ENCODE measurements at regions of chr20 and their contacts with region 1.

Region 1: DNA sequence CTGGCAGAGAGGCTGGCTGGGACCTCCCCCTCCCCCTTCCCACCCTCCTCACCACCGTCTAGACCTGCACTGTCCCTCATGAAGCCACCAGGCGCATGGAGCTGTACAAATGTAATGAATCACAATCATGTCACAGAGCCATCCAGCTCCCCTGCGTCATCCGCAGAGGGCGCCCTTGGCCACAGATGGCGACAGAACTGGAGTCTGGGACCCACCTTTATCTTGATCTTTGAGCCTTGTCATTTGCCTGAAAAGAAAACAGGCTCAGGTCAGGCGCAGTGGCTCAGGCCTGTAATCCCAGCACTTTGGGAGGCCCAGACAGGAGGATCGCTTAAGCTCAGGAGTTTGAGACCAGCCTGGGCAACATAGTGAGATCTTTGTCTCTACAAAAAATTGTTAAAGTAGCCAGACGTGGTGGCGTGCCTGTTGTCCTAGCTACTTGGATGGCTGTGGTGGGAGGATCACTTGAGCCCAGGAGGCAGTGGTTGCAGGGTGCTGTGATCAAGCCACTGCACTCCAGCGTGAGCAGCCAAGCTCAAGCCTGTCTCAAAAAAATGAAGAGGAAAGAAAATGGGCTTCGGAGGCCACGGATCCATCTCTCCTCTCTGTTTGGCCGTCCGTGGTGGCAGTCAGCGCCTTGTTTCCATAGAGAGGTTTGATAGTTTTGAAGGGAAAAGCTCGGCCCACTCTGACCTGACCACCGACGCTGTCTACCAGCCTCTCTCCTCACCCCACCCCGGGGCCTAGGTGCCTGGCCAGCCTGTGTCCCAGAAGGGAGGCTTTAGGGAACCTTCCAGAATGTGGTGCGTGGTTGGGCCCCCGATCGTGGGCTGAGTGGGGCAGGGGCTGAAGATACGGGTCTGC is 6.2 kb downstream of the COL9A3 start:
- DNase-seq: peak; percentile 98
- ATAC-seq: peak; percentile 61
- H3K4me3 ChIP-seq: peak overlapping the region in 1 of 3 experiments; percentile 71; a peak in 1 of 6 replicates
- H3K27ac ChIP-seq: peak overlapping the region; percentile 59
- H3K4me1 ChIP-seq: peaks cover 68% of the 10 kb centered on the region
- H3K27me3 ChIP-seq: no peaks in the 10 kb centered on the region
- CTCF ChIP-seq: peak; percentile 99
- EP300 ChIP-seq: peak; percentile 18 to 69; a peak in 3 of 4 replicates
- POLR2A ChIP-seq: 0 out of 4 replicates have a peak, but pooled peaks have one; percentile 3 to 35
- RAD21 ChIP-seq: peak; percentile 98

Region 2: GRCh38 chr20:62808211-62808865 is 14.7 kb before region 1 on chr20:
- CTCF ChIA-PET with region 1: interaction called, 3 read pairs
- POLR2A ChIA-PET with region 1: interaction called, 13 read pairs
- in situ Hi-C with region 1: no loop called
- intact Hi-C with region 1: loop called (anchors 1 kb)
- DNase-seq: peak; percentile 66
- ATAC-seq: peak; percentile 18
- H3K4me3 ChIP-seq: no peak overlapping the region
- H3K27ac ChIP-seq: no peak overlapping the region
- H3K4me1 ChIP-seq: peaks cover 38% of the 10 kb centered on the region
- H3K27me3 ChIP-seq: no peaks in the 10 kb centered on the region
- CTCF ChIP-seq: peak; percentile 95
- EP300 ChIP-seq: no peak
- POLR2A ChIP-seq: no peak; a peak in 3 of 4 replicates
- RAD21 ChIP-seq: peak; percentile 91

Region 3: DNA sequence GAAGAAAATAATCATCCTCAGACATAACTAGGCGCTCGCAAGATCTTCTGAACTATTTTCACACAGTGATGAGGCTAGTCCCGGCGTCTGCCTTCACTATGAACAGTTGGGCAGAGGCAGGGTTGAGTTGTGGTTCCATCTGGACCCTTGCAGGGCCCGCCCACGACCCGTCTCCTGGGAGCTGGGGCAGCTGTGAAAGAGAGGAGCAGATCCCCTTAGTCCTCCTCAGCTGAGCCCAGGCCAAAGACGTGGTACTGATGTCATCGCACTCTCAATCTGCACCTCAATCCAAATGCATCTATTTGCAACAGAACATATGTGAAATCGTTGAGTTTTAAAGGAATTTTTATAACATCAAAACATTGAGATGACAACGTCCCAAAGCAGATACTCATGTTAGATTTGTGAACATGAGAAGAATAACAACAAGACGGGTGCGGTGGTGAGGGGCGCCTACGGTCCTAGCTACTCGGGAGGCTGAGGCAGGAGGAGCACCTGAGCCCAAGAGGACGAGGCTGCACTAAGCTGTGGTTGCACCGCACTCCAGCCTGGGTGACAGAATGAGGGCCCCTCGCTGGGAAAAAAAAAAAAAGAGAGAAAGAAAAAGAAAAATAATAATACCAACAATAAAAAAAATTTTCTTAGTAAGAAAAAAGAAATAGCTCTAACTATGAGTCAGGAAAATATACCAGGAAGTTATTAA is 23.3 kb after region 1 on chr20:
- CTCF ChIA-PET with region 1: interaction called, 14 read pairs
- POLR2A ChIA-PET with region 1: interaction called, 3 read pairs
- in situ Hi-C with region 1: no loop called
- intact Hi-C with region 1: loop called (anchors 1 kb)
- DNase-seq: no peak
- ATAC-seq: no peak
- H3K4me3 ChIP-seq: no peak overlapping the region
- H3K27ac ChIP-seq: no peak overlapping the region
- H3K4me1 ChIP-seq: no peaks in the 10 kb centered on the region
- H3K27me3 ChIP-seq: no peaks in the 10 kb centered on the region
- CTCF ChIP-seq: no peak
- EP300 ChIP-seq: no peak
- POLR2A ChIP-seq: no peak
- RAD21 ChIP-seq: no peak

Region 4: GRCh38 chr20:62861726-62862336 is 38.8 kb after region 1 on chr20 and contains the start of gene TCFL5:
- CTCF ChIA-PET with region 1: no interaction called
- POLR2A ChIA-PET with region 1: interaction called, 11 read pairs
- in situ Hi-C with region 1: no loop called
- intact Hi-C with region 1: loop called (anchors 5 kb)
- DNase-seq: peak; percentile 88
- ATAC-seq: peak; percentile 93
- H3K4me3 ChIP-seq: peak within 1 kb of the TSS; percentile 61 to 83 (median 77)
- H3K27ac ChIP-seq: peak within 1 kb of the TSS; percentile 20
- H3K4me1 ChIP-seq: peaks cover 44% of the 10 kb centered on the region
- H3K27me3 ChIP-seq: peaks cover 0 to 11% of the 10 kb centered on the region in 2 experiments; a peak in 2 of 5 replicates
- CTCF ChIP-seq: no peak; the same call in 1 of the 2 replicates
- EP300 ChIP-seq: peak in 1 of 2 experiments; percentile 39; a peak in 1 of 4 replicates
- POLR2A ChIP-seq: peak; percentile 66 to 78
- RAD21 ChIP-seq: no peak; the same call in 1 of the 2 replicates
- total RNA-seq, gene TCFL5: 20.0 and 21.1 TPM in 2 replicates

Region 5: DNA sequence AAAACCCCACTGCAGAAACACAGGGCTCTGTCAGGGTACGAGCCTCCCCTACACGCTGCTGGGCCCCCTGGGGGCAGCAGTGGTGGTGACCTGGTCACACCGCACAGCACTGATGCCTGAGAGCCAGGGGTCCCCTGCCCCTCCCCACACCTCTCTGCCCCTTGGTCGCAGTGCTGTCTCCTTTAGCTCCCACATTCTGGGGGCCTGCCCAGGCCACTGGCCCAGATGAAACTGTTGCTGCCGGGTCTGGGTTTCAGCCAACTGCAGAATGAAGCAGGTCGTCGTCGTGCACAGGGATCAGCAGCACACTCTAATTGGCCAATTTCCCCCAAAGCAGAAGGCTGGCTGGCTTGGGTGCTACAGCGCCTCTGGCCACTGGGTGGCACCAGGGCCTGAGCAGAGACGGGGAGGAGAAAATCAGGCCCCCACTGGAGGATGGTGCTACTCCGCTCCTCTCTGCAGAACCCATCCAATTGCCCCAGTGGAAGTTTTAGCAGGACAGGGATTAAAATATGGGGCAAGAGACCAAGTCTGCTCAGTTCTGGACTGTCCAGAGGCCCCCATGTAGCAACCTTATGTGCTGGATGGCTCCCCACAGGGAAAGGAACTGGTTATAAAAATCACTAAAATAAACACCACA is 77.2 kb after region 1 on chr20:
- CTCF ChIA-PET with region 1: interaction called, 6 read pairs
- POLR2A ChIA-PET with region 1: interaction called, 4 read pairs
- in situ Hi-C with region 1: no loop called
- intact Hi-C with region 1: loop called (anchors 1 kb)
- DNase-seq: peak; percentile 82
- ATAC-seq: peak; percentile 90
- H3K4me3 ChIP-seq: peak overlapping the region in 1 of 3 experiments; percentile 44; a peak in 2 of 6 replicates
- H3K27ac ChIP-seq: peak overlapping the region; percentile 23
- H3K4me1 ChIP-seq: peaks cover 32% of the 10 kb centered on the region
- H3K27me3 ChIP-seq: no peaks in the 10 kb centered on the region
- CTCF ChIP-seq: peak; percentile 98
- EP300 ChIP-seq: 0 out of 4 replicates have a peak, but pooled peaks of 1 of the 2 experiments have one; percentile 2
- POLR2A ChIP-seq: peak in 1 of 2 experiments; percentile 78; a peak in 2 of 4 replicates
- RAD21 ChIP-seq: peak; percentile 95

Region 6: DNA sequence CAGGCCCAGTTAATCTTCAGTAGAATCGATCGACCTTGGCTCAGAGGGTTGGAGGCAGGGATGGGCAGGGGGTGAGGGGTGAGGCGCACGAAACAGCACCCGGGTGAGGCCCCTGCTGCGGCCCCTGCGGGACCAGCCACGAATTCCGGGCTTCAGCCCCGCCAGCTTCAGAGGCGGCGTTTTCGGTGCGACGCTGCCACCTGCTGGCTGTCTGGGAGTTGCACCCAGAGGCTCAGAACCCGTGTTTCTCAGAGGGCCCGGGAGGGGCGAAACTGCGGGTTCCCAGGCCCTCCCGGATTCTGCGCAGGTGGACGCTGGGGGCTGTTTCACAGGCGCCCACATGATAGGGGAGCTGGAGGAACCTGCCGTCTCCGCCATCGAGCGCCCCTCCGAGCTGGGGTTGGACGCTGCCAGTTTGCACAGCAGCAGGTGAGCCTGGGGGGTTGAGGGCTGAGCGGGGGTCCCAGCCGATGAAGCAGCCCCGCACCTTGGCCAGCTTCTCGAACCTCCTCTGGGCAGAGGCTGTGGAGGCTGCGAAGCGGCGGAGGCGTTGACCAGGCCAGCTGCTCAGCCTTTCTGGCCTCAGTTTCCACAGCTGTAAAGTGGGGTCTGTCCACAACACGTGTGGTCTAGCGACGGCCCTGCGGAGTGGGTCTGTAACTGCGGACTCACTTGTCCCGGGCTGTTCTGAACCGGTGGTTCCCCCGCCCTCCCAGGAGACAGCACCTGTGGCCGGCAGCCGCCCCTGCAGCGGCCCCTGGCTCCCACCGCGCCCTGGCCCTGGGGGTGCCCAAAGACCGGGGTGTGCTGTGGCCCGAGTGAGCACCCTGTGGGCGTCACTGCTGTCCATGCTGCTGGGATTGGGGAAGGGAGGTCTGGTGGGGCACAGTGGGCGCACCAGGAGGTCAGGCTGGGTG is 186.3 kb after region 1 on chr20:
- CTCF ChIA-PET with region 1: interaction called, 7 read pairs
- POLR2A ChIA-PET with region 1: no interaction called
- in situ Hi-C with region 1: no loop called
- intact Hi-C with region 1: loop called (anchors 2 kb)
- DNase-seq: peak; percentile 63
- ATAC-seq: peak; percentile 88
- H3K4me3 ChIP-seq: peak overlapping the region in 1 of 3 experiments; percentile 57; a peak in 3 of 6 replicates
- H3K27ac ChIP-seq: no peak overlapping the region
- H3K4me1 ChIP-seq: peaks cover 20% of the 10 kb centered on the region
- H3K27me3 ChIP-seq: peaks cover 31 to 94% of the 10 kb centered on the region in 2 experiments
- CTCF ChIP-seq: peak; percentile 100
- EP300 ChIP-seq: peak in 1 of 2 experiments; percentile 44; a peak in 1 of 4 replicates
- POLR2A ChIP-seq: no peak
- RAD21 ChIP-seq: peak; percentile 99

Measured in HepG2 (cell line).